ENCODE measurements at regions of chr11 and their contacts with region 1.

Region 1: DNA sequence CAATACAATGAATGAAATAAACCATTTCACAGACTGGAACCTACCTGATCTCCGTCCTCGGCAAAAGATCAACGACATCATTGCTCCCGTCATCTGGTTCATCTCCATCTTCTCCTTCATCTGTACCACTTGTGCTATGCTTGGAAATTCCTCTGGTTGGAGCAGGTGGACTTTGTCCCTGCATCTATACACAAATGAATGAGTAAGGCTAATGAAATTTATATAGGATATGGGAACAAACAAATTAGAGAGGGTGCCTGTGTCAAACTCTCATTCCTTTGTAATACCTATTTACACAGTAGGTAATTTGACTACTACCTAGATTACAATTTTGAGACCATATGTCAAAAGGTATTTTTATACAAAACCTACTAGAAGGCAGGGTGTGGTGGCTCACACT is 59.4 kb downstream of the F2 start:
- DNase-seq: no peak
- ATAC-seq: no peak
- H3K4me3 ChIP-seq: no peak overlapping the region
- H3K27ac ChIP-seq: no peak overlapping the region
- H3K4me1 ChIP-seq: no peaks in the 10 kb centered on the region
- H3K27me3 ChIP-seq: no peaks in the 10 kb centered on the region
- CTCF ChIP-seq: no peak
- POLR2A ChIP-seq: no peak
- RAD21 ChIP-seq: no peak

Region 2: GRCh38 chr11:46865340-46865739 is 86.9 kb after region 1 on chr11:
- CTCF ChIA-PET with region 1: no interaction called
- POLR2A ChIA-PET with region 1: no interaction called
- dilution Hi-C with region 1: no loop called
- in situ Hi-C with region 1: no loop called
- intact Hi-C with region 1: no loop called
- DNase-seq: peak; percentile 93
- ATAC-seq: peak; percentile 95
- H3K4me3 ChIP-seq: no peak overlapping the region
- H3K27ac ChIP-seq: peak overlapping the region; percentile 54; the same call in 1 of the 2 replicates
- H3K4me1 ChIP-seq: peaks cover 6% of the 10 kb centered on the region
- H3K27me3 ChIP-seq: no peaks in the 10 kb centered on the region
- CTCF ChIP-seq: no peak
- POLR2A ChIP-seq: no peak
- RAD21 ChIP-seq: no peak

Region 3: GRCh38 chr11:47724041-47724729 is 945.8 kb after region 1 on chr11:
- CTCF ChIA-PET with region 1: no interaction called
- POLR2A ChIA-PET with region 1: no interaction called
- dilution Hi-C with region 1: no loop called
- in situ Hi-C with region 1: loop called (anchors 25 kb)
- intact Hi-C with region 1: no loop called
- DNase-seq: peak; percentile 89
- ATAC-seq: peak; percentile 83
- H3K4me3 ChIP-seq: no peak overlapping the region
- H3K27ac ChIP-seq: peak overlapping the region; percentile 67; the same call in 1 of the 2 replicates
- H3K4me1 ChIP-seq: peaks cover 2% of the 10 kb centered on the region; the same call in 1 of the 2 replicates
- H3K27me3 ChIP-seq: no peaks in the 10 kb centered on the region
- CTCF ChIP-seq: no peak
- POLR2A ChIP-seq: no peak
- RAD21 ChIP-seq: no peak

Measured in IMR-90 (cell line).